ENCODE measurements at regions of chr4 and their contacts with region 1.

Region 1: DNA sequence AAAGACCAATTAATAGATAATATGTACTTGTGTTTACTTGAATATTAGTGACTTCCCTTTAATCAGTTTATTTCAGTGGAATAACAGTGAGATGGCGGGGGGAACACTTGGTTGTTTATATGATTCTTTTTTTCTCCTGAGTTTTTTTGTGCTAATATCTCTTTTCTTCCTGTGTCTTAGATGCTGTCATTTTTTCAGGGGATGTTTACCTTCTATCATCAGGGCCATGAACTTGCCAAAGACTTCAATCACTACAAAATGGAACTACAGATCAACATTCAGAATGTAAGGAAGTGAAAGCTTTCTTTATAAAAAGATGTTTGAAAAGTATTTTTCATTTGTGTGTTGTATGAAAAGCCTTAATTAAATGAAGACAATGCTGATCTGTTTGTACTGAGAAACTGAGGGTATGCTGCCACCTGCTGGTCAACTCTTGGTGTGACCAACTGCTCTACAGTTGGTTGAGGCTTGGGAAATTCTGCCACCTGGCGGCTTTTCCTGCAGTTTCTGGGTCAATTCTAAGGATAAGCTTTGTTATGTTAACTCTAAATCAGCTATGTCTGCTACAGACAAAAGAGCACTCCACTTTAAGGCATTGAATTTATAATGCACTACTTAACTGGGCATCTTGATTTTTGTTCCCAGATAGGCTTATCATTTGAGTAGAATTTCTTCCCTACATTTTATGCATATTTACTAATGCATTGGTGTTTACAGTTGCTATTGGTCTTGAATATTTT is 134.8 kb downstream of the ARHGAP10 start:
- DNase-seq: peak; percentile 95
- ATAC-seq: peak; percentile 87
- H3K4me3 Mint-ChIP-seq: peak overlapping the region; percentile 0; the same call in 1 of the 2 replicates
- H3K27ac Mint-ChIP-seq: peak overlapping the region; percentile 75
- H3K4me1 Mint-ChIP-seq: peaks cover 43% of the 10 kb centered on the region
- H3K27me3 Mint-ChIP-seq: no peaks in the 10 kb centered on the region
- CTCF ChIP-seq: peak; percentile 97

Region 2: GRCh38 chr4:147480891-147481576 is 385.7 kb before region 1 on chr4 and contains the start of gene EDNRA:
- CTCF ChIA-PET with region 1: interaction called, 13 read pairs
- POLR2A ChIA-PET with region 1: no interaction called
- DNase-seq: peak; percentile 48
- ATAC-seq: peak; percentile 82
- H3K4me3 Mint-ChIP-seq: peak within 1 kb of the TSS; percentile 90
- H3K27ac Mint-ChIP-seq: no peak within 1 kb of the TSS
- H3K4me1 Mint-ChIP-seq: peaks cover 10% of the 10 kb centered on the region; the same call in 1 of the 2 replicates
- H3K27me3 Mint-ChIP-seq: peaks cover 37% of the 10 kb centered on the region
- CTCF ChIP-seq: no peak
- total RNA-seq, gene EDNRA: 2.1 to 2.5 TPM (median 2.3 TPM) in 3 replicates

Region 3: GRCh38 chr4:147590249-147590920 is 276.3 kb before region 1 on chr4:
- CTCF ChIA-PET with region 1: interaction called, 48 read pairs
- POLR2A ChIA-PET with region 1: no interaction called
- DNase-seq: peak; percentile 70
- ATAC-seq: peak; percentile 72
- H3K4me3 Mint-ChIP-seq: no peak overlapping the region
- H3K27ac Mint-ChIP-seq: no peak overlapping the region
- H3K4me1 Mint-ChIP-seq: peaks cover 23% of the 10 kb centered on the region
- H3K27me3 Mint-ChIP-seq: no peaks in the 10 kb centered on the region
- CTCF ChIP-seq: peak; percentile 51

Region 4: GRCh38 chr4:147629783-147630730 is 236.6 kb before region 1 on chr4:
- CTCF ChIA-PET with region 1: interaction called, 30 read pairs
- POLR2A ChIA-PET with region 1: interaction called, 3 read pairs
- DNase-seq: no peak
- ATAC-seq: no peak
- H3K4me3 Mint-ChIP-seq: no peak overlapping the region
- H3K27ac Mint-ChIP-seq: no peak overlapping the region
- H3K4me1 Mint-ChIP-seq: peaks cover 38% of the 10 kb centered on the region
- H3K27me3 Mint-ChIP-seq: no peaks in the 10 kb centered on the region
- CTCF ChIP-seq: no peak

Region 5: GRCh38 chr4:147678796-147679549 is 187.7 kb before region 1 on chr4:
- CTCF ChIA-PET with region 1: interaction called, 34 read pairs
- POLR2A ChIA-PET with region 1: no interaction called
- DNase-seq: peak; percentile 74
- ATAC-seq: peak; percentile 71
- H3K4me3 Mint-ChIP-seq: no peak overlapping the region
- H3K27ac Mint-ChIP-seq: peak overlapping the region; percentile 96
- H3K4me1 Mint-ChIP-seq: peaks cover 12% of the 10 kb centered on the region
- H3K27me3 Mint-ChIP-seq: no peaks in the 10 kb centered on the region
- CTCF ChIP-seq: no peak; the same call in 1 of the 2 replicates

Region 6: DNA sequence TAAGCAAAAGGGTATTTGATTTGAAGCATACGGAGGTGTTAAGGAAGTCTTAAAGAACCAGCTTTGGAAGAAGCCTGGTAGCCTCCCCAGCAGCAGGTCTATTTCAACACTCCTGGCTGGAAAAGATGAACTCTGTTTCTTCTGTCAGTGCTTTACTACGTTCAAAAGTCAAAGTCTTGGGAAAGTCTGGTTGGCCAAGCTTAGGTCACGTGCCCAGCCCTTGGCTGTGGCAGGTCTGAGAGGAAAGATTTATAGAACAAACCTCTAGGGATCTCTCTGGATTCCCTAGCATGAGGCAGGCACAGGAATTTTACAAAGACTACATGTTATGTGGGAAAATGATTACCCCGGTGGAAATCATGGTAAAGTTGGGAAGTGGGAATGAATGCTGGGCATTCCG is 143.4 kb before region 1 on chr4:
- CTCF ChIA-PET with region 1: interaction called, 11 read pairs
- POLR2A ChIA-PET with region 1: no interaction called
- DNase-seq: no peak
- ATAC-seq: no peak
- H3K4me3 Mint-ChIP-seq: no peak overlapping the region
- H3K27ac Mint-ChIP-seq: no peak overlapping the region
- H3K4me1 Mint-ChIP-seq: peaks cover 6% of the 10 kb centered on the region; the same call in 1 of the 2 replicates
- H3K27me3 Mint-ChIP-seq: peaks cover 18% of the 10 kb centered on the region
- CTCF ChIP-seq: no peak

Region 7: GRCh38 chr4:147843162-147843561 is 23.5 kb before region 1 on chr4:
- CTCF ChIA-PET with region 1: interaction called, 18 read pairs
- POLR2A ChIA-PET with region 1: no interaction called
- DNase-seq: no peak
- ATAC-seq: peak; percentile 71
- H3K4me3 Mint-ChIP-seq: no peak overlapping the region
- H3K27ac Mint-ChIP-seq: no peak overlapping the region
- H3K4me1 Mint-ChIP-seq: peaks cover 19% of the 10 kb centered on the region
- H3K27me3 Mint-ChIP-seq: no peaks in the 10 kb centered on the region
- CTCF ChIP-seq: no peak